Activated T-helper 1 cell treated with anti-CD3 and anti-CD28 coated beads, Interleukin-12 subunit alpha, Interleukin-12 subunit beta, Interleukin-2, Interleukin-4 antibody, amounts not matched to agents 30 ng/mL and 10 ng/mL and 1 ng/mL, durations not matched to agents 14 hours and 24 hours and 36 hours (primary cell): ENCODE measurements at regions of chr4 and their contacts with region 1.

Region 1: DNA sequence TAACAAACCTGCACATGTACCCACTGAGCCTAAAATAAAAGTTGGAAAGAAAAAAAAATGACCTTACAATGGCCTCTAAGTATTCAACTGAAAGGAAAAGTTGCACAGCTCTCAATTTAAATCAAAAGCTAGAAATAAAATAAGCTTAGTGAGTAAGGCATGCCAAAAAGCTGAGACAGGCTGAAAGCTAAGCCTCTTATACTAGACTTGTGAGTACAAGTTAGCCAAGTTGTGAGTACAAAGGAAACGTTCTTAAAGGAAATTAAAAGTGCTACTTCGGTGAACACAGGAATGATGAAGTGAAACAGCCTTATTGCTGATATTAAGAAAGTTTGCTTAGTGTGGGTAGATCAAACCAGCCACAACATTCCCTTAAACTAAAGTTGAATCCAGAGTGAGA is 707.9 kb upstream of the PITX2 start:
- DNase-seq: no peak
- H3K4me3 Mint-ChIP-seq: no peak overlapping the region
- H3K27ac Mint-ChIP-seq: no peak overlapping the region
- H3K4me1 Mint-ChIP-seq: no peaks in the 10 kb centered on the region
- H3K27me3 Mint-ChIP-seq: no peaks in the 10 kb centered on the region

Region 2: DNA sequence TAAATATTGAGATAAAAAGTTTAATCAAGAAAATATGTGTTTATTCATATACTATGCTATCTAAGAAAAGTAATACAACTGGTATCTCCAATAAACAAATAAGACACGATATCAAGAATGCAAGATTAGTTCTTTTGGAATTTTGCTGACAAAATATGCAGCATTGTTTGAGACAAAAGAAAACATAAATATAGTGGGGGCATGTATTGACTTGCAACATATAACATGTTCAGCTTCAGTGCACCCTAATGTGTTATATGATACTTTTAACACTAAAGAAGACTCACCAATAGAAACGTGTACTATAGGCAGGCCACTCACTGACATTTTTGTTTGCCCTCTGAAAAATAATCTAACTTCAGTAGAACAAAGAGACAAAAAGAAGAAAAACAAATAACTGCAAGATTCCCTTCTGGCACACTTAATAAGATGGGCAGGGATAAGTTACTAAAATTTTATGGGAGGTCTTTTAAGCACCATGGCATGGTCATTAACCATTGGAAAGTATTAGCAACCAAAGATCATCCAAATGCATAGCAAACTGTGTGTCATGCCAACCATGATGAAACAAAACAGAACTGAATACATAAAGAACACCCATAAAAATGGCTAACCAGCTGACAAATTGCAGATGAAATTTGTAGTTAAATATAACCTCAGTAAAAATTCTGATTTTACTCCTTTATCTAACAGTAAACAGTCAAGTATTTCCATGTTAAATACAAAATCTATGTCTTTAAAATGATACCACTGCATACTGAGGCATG is 366.6 kb after region 1 on chr4:
- intact Hi-C with region 1: no loop called
- DNase-seq: no peak
- H3K4me3 Mint-ChIP-seq: no peak overlapping the region
- H3K27ac Mint-ChIP-seq: no peak overlapping the region
- H3K4me1 Mint-ChIP-seq: no peaks in the 10 kb centered on the region
- H3K27me3 Mint-ChIP-seq: no peaks in the 10 kb centered on the region

Region 3: DNA sequence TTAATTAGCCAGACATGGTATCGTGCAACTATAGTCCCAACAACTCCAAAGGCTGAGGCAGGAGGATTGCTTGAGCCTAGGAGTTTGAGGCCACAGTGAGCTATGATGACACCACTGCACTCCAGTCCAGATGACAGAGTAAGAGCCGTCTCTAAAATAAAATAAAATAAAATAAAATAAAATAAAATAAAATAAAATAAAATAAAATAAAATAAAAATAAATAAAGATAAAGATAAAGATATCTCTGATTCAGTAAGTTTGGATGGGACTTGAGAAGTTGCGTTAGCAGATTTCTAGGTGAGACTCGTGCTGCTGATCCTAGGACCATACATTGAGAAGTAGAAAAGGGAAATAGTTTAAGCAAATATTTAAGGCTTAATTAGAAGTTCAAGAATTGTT is 559.6 kb after region 1 on chr4:
- intact Hi-C with region 1: loop called (anchors 10 kb)
- DNase-seq: no peak
- H3K4me3 Mint-ChIP-seq: no peak overlapping the region
- H3K27ac Mint-ChIP-seq: no peak overlapping the region
- H3K4me1 Mint-ChIP-seq: no peaks in the 10 kb centered on the region
- H3K27me3 Mint-ChIP-seq: no peaks in the 10 kb centered on the region